Activated T-helper 1 cell treated with anti-CD3 and anti-CD28 coated beads, Interleukin-12 subunit alpha, Interleukin-12 subunit beta, Interleukin-2, Interleukin-4 antibody, amounts not matched to agents 30 ng/mL and 10 ng/mL and 1 ng/mL, durations not matched to agents 14 hours and 24 hours and 36 hours (primary cell): ENCODE measurements at regions of chr14 and their contacts with region 1.

Region 1: DNA sequence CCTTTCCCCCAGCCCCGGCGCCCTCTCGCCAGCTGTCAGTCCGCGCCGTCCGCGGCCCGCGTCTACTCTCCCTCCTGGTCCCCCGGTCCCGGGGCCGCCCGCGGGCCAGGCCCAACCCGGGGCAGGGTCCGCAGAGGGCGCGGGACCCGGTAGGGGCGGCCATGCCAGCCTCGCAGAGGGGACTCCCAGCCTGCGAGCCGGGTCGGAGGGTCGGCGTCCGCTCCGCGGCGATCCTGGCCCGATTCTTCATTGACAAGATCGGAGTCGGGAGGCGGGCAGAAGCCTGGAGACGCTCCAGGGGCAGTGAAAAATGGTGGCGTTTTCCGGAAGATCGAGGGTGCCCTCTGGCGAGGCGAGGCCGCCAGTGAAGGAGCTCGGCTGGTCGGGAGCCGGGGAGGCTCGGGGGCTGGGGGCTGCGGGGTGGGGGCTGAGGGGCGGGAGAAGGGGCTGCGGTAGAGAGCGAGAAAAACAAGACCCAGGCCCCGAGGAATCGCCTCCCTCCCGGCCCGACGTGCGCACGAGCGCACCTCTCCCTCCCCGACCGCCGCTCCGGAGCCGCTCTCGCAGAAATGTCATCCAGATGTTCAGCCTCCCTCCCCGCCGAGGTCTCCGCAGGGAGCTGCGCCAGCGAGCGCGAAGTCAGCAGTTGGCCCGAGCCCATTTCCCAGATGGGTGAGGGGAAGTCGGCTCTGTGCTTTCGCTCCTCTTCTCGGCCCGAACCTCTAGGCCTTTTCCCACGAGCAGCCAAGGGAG is 647 bp upstream of the TGFB3 start:
- DNase-seq: peak; percentile 75
- H3K4me3 Mint-ChIP-seq: peak overlapping the region; percentile 84
- H3K27ac Mint-ChIP-seq: peak overlapping the region; percentile 85
- H3K4me1 Mint-ChIP-seq: peaks cover 52% of the 10 kb centered on the region
- H3K27me3 Mint-ChIP-seq: peaks cover 5% of the 10 kb centered on the region

Region 2: DNA sequence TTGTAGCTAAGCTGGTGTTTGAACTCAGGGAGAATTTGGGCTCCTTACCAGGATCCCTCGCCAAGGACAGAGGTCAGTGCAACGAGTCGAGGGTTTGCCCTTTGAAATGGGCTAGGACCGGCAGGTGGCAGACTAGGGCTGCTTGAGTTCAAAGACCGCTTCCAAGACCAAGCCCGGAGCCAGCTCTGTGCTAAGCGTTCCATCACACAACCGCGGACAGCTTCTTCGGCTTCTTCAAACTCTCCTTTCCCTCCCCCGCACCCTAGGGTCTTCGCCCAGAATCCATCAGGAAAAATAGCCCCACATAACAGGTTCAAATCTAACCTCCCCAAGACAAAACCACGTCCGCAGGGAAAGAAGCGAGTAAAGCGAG is 404.7 kb before region 1 on chr14:
- intact Hi-C with region 1: loop called (anchors 1 kb)
- DNase-seq: peak; percentile 61
- H3K4me3 Mint-ChIP-seq: peak overlapping the region; percentile 83
- H3K27ac Mint-ChIP-seq: peak overlapping the region; percentile 71
- H3K4me1 Mint-ChIP-seq: peaks cover 22% of the 10 kb centered on the region
- H3K27me3 Mint-ChIP-seq: peaks cover 7% of the 10 kb centered on the region

Region 3: DNA sequence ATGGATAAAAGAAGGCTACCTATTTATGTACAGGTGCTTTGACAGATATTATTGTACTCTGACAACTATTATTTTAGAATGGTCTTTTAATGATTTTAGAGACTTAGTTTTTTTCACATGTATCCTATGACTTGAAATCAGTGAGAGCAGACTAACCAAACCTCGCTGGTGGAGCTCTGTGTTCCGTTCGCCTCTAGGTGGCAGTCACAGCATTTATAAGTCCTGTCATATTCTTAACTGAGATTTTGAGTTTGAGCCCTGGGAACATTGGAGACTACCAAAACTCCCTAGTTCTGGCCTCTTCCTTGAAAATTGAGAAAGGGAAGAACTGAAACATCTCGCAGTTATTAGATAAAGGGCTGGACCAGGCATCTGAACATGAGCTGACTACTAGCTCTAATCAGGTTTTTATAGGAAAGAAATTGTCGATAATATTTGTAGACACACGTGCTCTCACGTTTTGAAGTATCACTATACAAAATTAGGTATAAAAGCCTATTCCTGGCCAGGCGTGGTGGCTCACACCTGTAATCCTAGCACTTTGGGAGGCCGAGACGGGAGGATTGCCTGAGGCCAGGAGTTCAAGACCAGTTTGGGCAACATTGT is 273.1 kb before region 1 on chr14:
- intact Hi-C with region 1: loop called (anchors 1 kb)
- DNase-seq: peak; percentile 45
- H3K4me3 Mint-ChIP-seq: no peak overlapping the region
- H3K27ac Mint-ChIP-seq: no peak overlapping the region
- H3K4me1 Mint-ChIP-seq: no peaks in the 10 kb centered on the region
- H3K27me3 Mint-ChIP-seq: no peaks in the 10 kb centered on the region

Region 4: DNA sequence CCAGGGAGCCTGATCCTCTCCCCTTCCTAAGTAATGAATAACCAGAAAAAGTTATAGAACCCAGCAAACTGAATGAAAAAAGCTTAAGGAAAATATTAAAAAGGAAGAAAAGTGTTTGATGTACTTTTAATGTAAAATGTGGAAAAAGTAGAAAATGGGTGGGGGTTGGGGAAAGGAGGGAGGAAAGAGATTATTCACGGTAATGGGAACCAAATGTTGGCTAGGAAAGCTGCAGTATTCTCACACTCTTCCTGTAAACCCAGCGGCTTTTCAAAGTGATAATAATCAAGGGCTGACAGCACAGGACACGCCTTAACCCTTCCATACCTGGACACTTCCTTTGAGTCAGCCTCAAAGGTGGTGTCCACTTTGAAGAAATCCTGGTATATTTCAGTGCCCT is 139.9 kb before region 1 on chr14:
- intact Hi-C with region 1: no loop called
- DNase-seq: no peak
- H3K4me3 Mint-ChIP-seq: no peak overlapping the region
- H3K27ac Mint-ChIP-seq: no peak overlapping the region
- H3K4me1 Mint-ChIP-seq: no peaks in the 10 kb centered on the region
- H3K27me3 Mint-ChIP-seq: no peaks in the 10 kb centered on the region

Region 5: GRCh38 chr14:75906676-75907280 is 75.7 kb before region 1 on chr14:
- intact Hi-C with region 1: loop called (anchors 1 kb)
- DNase-seq: peak; percentile 40
- H3K4me3 Mint-ChIP-seq: no peak overlapping the region
- H3K27ac Mint-ChIP-seq: no peak overlapping the region
- H3K4me1 Mint-ChIP-seq: no peaks in the 10 kb centered on the region
- H3K27me3 Mint-ChIP-seq: no peaks in the 10 kb centered on the region

Region 6: GRCh38 chr14:75968456-75968855 is 14.0 kb before region 1 on chr14:
- intact Hi-C with region 1: no loop called
- DNase-seq: no peak
- H3K4me3 Mint-ChIP-seq: no peak overlapping the region
- H3K27ac Mint-ChIP-seq: no peak overlapping the region
- H3K4me1 Mint-ChIP-seq: no peaks in the 10 kb centered on the region
- H3K27me3 Mint-ChIP-seq: no peaks in the 10 kb centered on the region